H1 (cell line): ENCODE measurements at regions of chr15 and their contacts with region 1.

Region 1: DNA sequence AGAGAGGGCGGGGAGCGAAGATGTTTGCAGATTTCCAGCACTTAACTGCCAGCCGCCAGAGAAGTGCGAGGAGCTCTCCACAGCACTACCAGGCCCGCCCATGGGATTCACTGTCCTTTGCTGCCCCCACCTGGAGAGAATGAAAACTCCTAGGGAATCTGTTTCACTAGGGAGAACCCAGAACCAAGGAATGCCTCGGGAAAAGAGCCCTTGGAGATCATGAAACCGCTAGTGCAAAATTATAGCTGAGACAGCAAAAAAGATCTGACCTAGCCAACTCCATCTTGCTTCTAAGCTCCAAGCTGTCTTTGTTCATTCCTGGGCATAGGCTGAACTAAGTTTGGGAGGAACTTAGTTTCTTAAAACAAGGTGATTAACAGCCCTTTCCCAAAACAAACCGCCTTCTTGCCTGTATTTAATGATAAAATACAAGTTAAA is 82.6 kb upstream of the GCNT3 start:
- DNase-seq: peak; percentile 75 to 96
- H3K4me3 ChIP-seq: no peak overlapping the region
- H3K27ac ChIP-seq: no peak overlapping the region
- H3K4me1 ChIP-seq: no peaks in the 10 kb centered on the region
- H3K27me3 ChIP-seq: no peaks in the 10 kb centered on the region
- CTCF ChIP-seq: peak; percentile 64 to 86 (median 82)
- EP300 ChIP-seq: no peak
- POLR2A ChIP-seq: no peak
- RAD21 ChIP-seq: peak; percentile 95 to 97

Region 2: DNA sequence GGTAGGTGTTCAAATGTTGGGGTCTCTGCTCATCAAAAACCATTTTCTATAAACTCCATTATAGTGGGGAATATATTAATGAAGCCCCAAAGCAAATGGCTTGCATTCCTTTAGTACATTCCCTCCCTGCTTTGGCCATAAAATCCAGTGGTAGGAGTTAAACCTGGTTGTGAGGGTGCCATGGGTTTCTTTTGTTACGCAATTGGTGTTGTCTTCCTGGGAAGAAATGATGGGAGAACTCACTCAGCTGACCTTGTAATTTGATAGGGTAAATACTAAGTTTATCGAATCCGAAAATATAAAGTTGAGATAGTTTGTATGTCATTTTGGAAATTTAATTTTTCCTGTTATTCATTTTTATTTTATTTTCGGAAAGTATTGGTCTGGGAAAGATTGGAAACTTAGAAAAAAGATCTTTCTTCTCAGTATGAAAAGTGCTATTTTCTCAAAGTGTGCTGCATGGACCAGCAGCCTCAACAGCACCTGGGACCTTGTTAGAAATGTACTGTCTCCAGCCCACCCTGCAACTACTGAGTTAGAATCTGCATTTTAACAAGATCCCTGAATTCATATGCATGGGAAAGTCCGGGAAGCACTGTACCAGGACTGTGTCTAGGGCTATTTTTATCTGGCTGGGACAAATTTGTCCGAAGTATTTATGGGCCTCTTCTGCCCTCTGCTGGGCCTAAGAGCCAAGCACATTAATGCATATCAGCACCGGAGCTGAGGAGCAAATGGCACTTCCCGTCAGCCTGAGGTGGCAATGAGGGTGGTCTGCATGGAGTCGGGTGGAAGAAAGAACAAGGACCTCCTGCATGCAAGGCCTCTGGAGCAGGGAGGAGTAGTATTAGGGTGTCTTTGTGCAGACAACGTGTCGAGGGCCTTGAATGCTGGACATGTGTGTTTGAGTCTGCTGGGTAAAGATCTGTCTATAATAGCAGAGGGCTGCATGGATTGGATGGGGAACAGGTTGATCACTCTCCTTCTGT is 36.3 kb before region 1 on chr15:
- CTCF ChIA-PET with region 1: interaction called, 11 read pairs
- POLR2A ChIA-PET with region 1: no interaction called
- DNase-seq: peak; percentile 29 to 63
- H3K4me3 ChIP-seq: peak overlapping the region in 1 of 4 experiments; percentile 10; a peak in 2 of 8 replicates
- H3K27ac ChIP-seq: no peak overlapping the region
- H3K4me1 ChIP-seq: peaks cover 0 to 6% (median 2%) of the 10 kb centered on the region in 4 experiments; a peak in 2 of 7 replicates
- H3K27me3 ChIP-seq: no peaks in the 10 kb centered on the region
- CTCF ChIP-seq: peak; percentile 63 to 91 (median 90)
- EP300 ChIP-seq: no peak
- POLR2A ChIP-seq: no peak
- RAD21 ChIP-seq: peak; percentile 98

Region 3: DNA sequence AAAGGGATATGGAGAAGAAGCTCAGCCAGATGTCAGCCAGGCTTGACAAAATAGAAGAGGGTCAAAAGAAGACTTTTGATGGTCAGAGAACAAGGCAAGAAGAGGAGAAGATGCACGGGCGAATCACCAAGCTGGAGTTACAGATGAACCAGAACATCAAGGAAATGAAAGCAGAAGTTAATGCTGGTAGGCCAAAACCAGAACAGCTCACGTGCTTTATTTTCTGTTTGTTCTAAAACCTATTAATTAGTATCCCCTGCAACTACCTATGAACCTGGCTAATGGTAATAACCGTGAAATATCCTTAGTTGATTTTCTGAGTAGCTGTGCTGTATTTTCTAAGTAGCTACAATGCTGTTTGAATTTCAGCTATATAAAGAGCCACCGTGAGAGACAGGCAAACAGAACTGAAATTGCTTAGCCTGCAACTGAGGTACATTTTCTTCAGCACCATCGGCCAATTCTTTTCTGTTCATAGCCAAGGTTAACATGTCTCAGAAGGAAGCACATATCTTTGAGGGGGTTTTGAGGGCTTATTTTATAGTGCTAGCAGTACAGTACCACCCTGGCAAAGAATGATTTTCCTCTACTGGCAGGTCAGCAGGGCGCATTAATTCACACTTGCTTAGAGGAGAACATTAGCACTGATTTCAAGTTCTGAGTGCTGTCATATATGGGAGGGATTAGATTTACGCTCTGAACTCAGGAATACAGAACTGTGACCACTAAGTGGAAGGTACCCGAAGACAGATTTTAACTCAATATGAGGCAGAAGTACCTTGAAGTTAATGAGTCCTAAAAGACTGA is 12.1 kb before region 1 on chr15:
- CTCF ChIA-PET with region 1: interaction called, 54 read pairs
- POLR2A ChIA-PET with region 1: no interaction called
- DNase-seq: no peak
- H3K4me3 ChIP-seq: no peak overlapping the region
- H3K27ac ChIP-seq: no peak overlapping the region
- H3K4me1 ChIP-seq: no peaks in the 10 kb centered on the region
- H3K27me3 ChIP-seq: no peaks in the 10 kb centered on the region
- CTCF ChIP-seq: no peak
- EP300 ChIP-seq: no peak
- POLR2A ChIP-seq: no peak
- RAD21 ChIP-seq: no peak

Region 4: GRCh38 chr15:59553879-59554735 is 25.1 kb after region 1 on chr15:
- CTCF ChIA-PET with region 1: interaction called, 10 read pairs
- POLR2A ChIA-PET with region 1: no interaction called
- DNase-seq: no peak
- H3K4me3 ChIP-seq: no peak overlapping the region
- H3K27ac ChIP-seq: no peak overlapping the region
- H3K4me1 ChIP-seq: peaks cover 0 to 4% (median 2%) of the 10 kb centered on the region in 4 experiments; a peak in 3 of 7 replicates
- H3K27me3 ChIP-seq: no peaks in the 10 kb centered on the region
- CTCF ChIP-seq: no peak
- EP300 ChIP-seq: no peak
- POLR2A ChIP-seq: no peak
- RAD21 ChIP-seq: no peak

Region 5: DNA sequence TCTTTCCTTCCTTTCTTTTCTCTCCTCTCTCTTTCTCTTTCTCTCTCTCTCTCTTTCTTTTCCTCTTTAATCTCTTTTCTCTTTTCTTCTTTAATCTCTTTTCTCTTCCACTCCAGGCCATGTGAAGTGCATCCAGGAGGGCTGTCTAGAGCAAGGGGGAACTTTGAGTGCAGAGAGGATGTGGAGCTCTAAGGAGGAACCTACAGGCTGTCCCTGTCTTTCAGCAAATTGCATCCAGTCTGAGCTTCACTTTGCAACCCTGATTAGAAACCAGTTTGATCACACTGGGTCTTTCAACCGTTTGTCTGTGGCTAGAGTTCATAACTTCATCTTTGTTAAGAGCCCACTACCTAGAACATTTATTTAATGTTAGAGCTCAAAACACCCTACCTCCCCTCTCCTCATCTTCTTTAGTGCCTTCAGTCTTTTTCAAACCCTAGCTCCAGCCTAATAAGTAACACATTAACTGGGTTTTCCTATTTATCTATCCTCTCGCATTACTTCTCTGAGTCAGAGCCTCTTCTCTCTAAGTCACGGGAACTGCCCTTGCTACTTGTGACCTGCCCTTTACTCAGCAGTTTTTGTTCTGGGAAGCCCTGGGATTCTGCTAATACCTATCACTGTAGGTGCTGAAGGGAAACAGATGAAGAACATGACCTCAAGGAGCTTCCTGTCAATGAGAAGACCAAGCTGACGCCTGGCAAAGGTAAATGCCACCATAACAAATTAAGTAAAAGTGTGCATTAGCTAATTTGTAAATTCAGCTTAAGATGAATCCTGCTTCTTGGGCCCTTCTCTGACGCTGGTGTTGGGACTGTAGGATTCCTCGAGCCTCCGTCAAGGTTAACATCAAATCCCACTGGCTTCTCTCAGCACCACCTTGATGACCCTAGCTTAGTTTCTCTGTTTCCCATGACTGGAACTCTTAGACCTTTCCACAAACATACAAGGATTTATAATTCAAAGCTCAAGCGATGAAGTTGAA is 82.6 kb after region 1 on chr15 and contains the start of gene GCNT3:
- CTCF ChIA-PET with region 1: interaction called, 39 read pairs
- POLR2A ChIA-PET with region 1: no interaction called
- DNase-seq: no peak
- H3K4me3 ChIP-seq: no peak within 1 kb of the TSS
- H3K27ac ChIP-seq: no peak within 1 kb of the TSS
- H3K4me1 ChIP-seq: no peaks in the 10 kb centered on the region
- H3K27me3 ChIP-seq: no peaks in the 10 kb centered on the region
- CTCF ChIP-seq: no peak
- EP300 ChIP-seq: no peak
- POLR2A ChIP-seq: no peak
- RAD21 ChIP-seq: no peak
- total RNA-seq, gene GCNT3: not detected in 2 replicates

Region 6: GRCh38 chr15:59632714-59633113 is 103.7 kb after region 1 on chr15:
- CTCF ChIA-PET with region 1: interaction called, 92 read pairs
- POLR2A ChIA-PET with region 1: interaction called, 3 read pairs
- DNase-seq: peak; percentile 33 to 64
- H3K4me3 ChIP-seq: no peak overlapping the region
- H3K27ac ChIP-seq: no peak overlapping the region
- H3K4me1 ChIP-seq: no peaks in the 10 kb centered on the region
- H3K27me3 ChIP-seq: no peaks in the 10 kb centered on the region
- CTCF ChIP-seq: peak; percentile 58 to 81 (median 81)
- EP300 ChIP-seq: no peak
- POLR2A ChIP-seq: no peak
- RAD21 ChIP-seq: peak; percentile 80 to 86

Region 7: DNA sequence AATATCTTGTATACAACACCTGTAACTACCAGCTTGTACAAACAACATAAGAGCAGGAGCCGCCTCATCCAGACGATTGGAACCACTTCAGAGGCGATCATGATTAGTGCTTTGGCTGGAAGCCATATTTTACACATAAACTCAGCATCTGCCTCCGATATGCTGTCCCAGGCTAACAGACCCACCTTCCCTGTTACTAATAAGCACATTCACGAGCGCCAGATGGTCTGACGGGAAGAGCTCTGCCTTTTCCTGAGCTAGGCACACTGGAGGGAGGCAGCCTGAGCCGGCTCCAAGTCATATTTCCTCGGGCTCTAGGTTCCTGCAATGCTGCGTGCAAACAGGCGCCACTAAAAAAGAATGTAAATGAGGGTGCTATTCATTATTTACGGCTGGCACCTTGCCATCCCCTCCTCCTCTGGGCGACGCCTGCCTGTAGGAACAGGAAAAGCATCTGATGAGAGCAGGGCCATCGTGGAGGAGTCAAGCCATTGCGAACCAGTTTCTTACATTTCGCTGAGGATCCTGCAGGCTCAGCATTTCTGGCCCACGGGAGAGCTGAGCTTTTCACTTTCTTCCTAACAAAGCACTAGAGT is 770.6 kb after region 1 on chr15:
- CTCF ChIA-PET with region 1: no interaction called
- POLR2A ChIA-PET with region 1: no interaction called
- DNase-seq: no peak
- H3K4me3 ChIP-seq: no peak overlapping the region
- H3K27ac ChIP-seq: no peak overlapping the region
- H3K4me1 ChIP-seq: peaks cover 0 to 3% (median 0%) of the 10 kb centered on the region in 4 experiments; a peak in 2 of 7 replicates
- H3K27me3 ChIP-seq: no peaks in the 10 kb centered on the region
- CTCF ChIP-seq: peak; percentile 1 to 38 (median 23); a peak in 2 of 4 replicates
- EP300 ChIP-seq: no peak
- POLR2A ChIP-seq: no peak
- RAD21 ChIP-seq: peak in 1 of 2 experiments; percentile 18; a peak in 1 of 4 replicates